SK-N-SH (cell line): ENCODE measurements at regions of chr6 and their contacts with region 1.

Region 1: GRCh38 chr6:153959281-153959680 is 79.8 kb upstream of the OPRM1 start:
- DNase-seq: no peak
- H3K4me3 ChIP-seq: no peak overlapping the region
- H3K27ac ChIP-seq: no peak overlapping the region
- H3K4me1 ChIP-seq: peaks cover 0 to 7% of the 10 kb centered on the region in 2 experiments; a peak in 2 of 4 replicates
- H3K27me3 ChIP-seq: no peaks in the 10 kb centered on the region
- CTCF ChIP-seq: no peak
- EP300 ChIP-seq: no peak
- RAD21 ChIP-seq: no peak

Region 2: DNA sequence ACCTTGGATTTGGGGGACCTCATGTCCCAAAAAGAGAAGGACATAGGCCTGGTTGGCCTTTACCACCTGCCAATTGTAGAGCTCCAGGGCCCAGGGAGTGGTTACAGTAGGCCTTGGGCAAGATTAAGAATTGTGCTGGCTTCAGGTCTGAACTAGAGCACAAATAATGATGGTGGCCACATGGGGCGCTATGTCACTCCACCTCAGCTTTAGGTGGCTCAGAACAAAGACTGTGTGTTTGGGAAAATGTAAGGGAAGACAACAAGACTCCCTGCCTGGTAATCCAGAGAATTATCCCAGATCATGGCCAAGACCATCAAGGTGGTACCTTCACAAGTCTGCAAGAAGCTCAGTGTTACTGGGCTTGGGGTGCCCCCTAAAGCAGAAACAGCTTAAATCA is 145.1 kb before region 1 on chr6:
- CTCF ChIA-PET with region 1: no interaction called
- POLR2A ChIA-PET with region 1: no interaction called
- DNase-seq: no peak
- H3K4me3 ChIP-seq: no peak overlapping the region
- H3K27ac ChIP-seq: no peak overlapping the region
- H3K4me1 ChIP-seq: no peaks in the 10 kb centered on the region
- H3K27me3 ChIP-seq: no peaks in the 10 kb centered on the region
- CTCF ChIP-seq: peak; percentile 33; the same call in 1 of the 2 replicates
- EP300 ChIP-seq: no peak
- RAD21 ChIP-seq: no peak

Region 3: DNA sequence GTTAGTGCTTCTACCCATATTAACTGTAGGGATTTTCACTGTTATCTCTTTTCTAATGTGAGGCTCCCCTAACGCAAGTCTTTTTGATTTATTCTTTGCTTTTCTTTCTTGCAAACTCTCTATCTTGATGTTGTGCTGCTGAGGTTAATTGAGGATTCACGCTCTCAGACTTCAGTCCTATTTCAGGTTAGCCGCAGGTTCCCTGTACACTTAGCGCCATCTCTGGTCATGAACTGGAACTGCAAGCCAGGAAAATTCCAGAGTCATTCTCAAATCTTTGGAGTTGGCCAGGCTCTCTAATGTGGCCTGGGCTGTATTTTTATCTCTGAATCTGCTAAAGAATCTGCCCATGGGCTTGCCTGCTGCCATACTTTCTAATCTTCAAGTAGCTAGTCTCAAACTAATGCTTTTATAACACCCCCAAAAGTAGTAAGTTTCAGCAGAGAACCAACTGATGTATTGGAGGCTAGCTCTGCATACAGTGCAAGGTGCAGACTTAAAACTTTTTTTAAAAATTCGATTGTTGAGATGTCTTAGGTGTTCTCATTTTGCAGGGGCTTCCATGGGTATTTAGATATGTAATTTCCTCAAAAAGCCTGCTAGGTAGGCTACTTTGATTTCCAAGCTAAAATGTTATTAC is 11.4 kb before region 1 on chr6:
- CTCF ChIA-PET with region 1: interaction called, 11 read pairs
- POLR2A ChIA-PET with region 1: no interaction called
- DNase-seq: peak; percentile 19
- H3K4me3 ChIP-seq: no peak overlapping the region; a peak in 1 of 4 replicates
- H3K27ac ChIP-seq: no peak overlapping the region
- H3K4me1 ChIP-seq: peaks cover 0 to 2% of the 10 kb centered on the region in 2 experiments; a peak in 1 of 4 replicates
- H3K27me3 ChIP-seq: no peaks in the 10 kb centered on the region
- CTCF ChIP-seq: peak; percentile 86
- EP300 ChIP-seq: no peak
- RAD21 ChIP-seq: peak; percentile 84